ENCODE measurements at regions of chr5 and their contacts with region 1.

Region 1: GRCh38 chr5:134176511-134177368 is at the start of gene SKP1:
- DNase-seq: peak; percentile 48
- H3K4me3 ChIP-seq: peak within 1 kb of the TSS; percentile 90
- H3K27ac ChIP-seq: peak within 1 kb of the TSS; percentile 97
- H3K27me3 ChIP-seq: no peaks in the 10 kb centered on the region
- CTCF ChIP-seq: no peak
- polyA plus RNA-seq, gene SKP1: 725 and 1,036 TPM in 2 replicates

Region 2: GRCh38 chr5:133460172-133460758 is 716.5 kb before region 1 on chr5:
- CTCF ChIA-PET with region 1: no interaction called
- POLR2A ChIA-PET with region 1: no interaction called
- DNase-seq: no peak
- H3K4me3 ChIP-seq: no peak overlapping the region
- H3K27ac ChIP-seq: no peak overlapping the region
- H3K27me3 ChIP-seq: no peaks in the 10 kb centered on the region
- CTCF ChIP-seq: peak; percentile 48

Region 3: DNA sequence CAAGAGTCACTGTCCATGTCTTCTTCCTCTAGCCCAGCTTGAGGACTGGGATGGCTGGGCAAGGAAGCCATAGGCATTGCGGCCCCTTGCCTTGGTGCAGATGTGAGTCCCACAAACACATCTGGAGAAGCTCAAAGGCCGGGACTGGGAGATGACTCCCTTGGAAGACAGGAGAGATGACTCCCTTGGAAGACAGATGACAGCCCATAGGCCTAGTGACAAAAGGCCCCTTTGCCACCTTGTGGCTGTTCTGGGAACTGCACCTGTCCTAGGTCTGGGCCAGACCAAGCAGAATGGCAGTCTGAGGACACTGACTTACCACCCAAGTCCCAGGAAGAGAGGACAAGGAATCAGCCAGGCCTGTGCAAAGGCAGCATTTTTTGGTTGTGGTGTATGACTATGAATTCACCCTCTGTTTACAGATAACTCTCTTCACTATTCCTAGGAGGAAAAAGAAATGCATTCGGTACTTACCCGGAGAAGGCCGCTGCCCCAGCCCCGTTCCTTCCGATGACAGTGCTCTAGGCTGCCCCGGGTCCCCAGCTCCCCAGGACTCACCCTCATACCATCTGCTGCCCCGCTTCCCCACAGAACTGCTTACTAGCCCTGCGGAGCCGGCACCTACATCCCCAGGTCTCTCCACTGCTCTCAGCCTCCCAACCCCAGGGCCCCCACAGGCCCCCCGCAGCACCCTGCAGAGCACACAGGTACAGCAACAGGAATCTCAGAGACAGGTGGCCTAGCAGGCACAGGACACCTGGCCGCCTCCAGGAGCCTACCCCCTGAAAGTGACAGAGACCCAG is 30.8 kb before region 1 on chr5:
- CTCF ChIA-PET with region 1: no interaction called
- POLR2A ChIA-PET with region 1: interaction called, 17 read pairs
- DNase-seq: no peak
- H3K4me3 ChIP-seq: no peak overlapping the region
- H3K27ac ChIP-seq: peak overlapping the region; percentile 21
- H3K27me3 ChIP-seq: no peaks in the 10 kb centered on the region
- CTCF ChIP-seq: peak; percentile 87

Region 4: GRCh38 chr5:134240421-134240962 is 63.8 kb after region 1 on chr5:
- CTCF ChIA-PET with region 1: no interaction called
- POLR2A ChIA-PET with region 1: interaction called, 17 read pairs
- DNase-seq: peak; percentile 61
- H3K4me3 ChIP-seq: no peak overlapping the region; the same call in 1 of the 2 replicates
- H3K27ac ChIP-seq: peak overlapping the region; percentile 55
- H3K27me3 ChIP-seq: no peaks in the 10 kb centered on the region
- CTCF ChIP-seq: no peak

Region 5: GRCh38 chr5:134370871-134371833 is 194.4 kb after region 1 on chr5 and contains the start of gene UBE2B:
- CTCF ChIA-PET with region 1: no interaction called
- POLR2A ChIA-PET with region 1: interaction called, 11 read pairs
- DNase-seq: peak; percentile 100
- H3K4me3 ChIP-seq: peak within 1 kb of the TSS; percentile 96
- H3K27ac ChIP-seq: peak within 1 kb of the TSS; percentile 99
- H3K27me3 ChIP-seq: no peaks in the 10 kb centered on the region
- CTCF ChIP-seq: no peak
- polyA plus RNA-seq, gene UBE2B: 57.3 and 99.2 TPM in 2 replicates

Measured in AG04450 (cell line).